A673 (cell line): ENCODE measurements at regions of chr2 and their contacts with region 1.

Region 1: DNA sequence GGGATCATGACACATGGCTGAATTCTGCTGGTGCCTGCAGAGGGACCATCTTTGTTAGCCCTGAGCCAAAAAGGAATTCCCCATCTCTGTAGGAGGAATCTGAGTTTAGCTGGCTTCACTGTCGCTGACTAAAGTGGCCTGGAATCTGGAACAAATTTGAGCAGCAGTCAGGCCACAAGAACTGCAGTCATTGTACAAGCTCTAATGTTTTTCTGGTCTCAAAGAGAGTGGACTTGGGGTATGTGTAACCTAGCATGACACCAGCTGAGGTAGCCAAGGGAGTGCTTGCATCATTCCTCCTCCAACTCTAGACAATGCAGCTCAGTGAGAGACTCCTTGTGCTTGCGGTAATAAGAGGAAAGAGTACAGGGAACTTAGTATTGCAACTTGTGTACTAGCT is 539.1 kb upstream of the LRRTM4 start:
- DNase-seq: no peak
- H3K4me3 ChIP-seq: no peak overlapping the region
- H3K27ac ChIP-seq: peak overlapping the region; percentile 100
- H3K4me1 ChIP-seq: peaks cover 49% of the 10 kb centered on the region
- H3K27me3 ChIP-seq: no peaks in the 10 kb centered on the region
- CTCF ChIP-seq: no peak

Region 2: DNA sequence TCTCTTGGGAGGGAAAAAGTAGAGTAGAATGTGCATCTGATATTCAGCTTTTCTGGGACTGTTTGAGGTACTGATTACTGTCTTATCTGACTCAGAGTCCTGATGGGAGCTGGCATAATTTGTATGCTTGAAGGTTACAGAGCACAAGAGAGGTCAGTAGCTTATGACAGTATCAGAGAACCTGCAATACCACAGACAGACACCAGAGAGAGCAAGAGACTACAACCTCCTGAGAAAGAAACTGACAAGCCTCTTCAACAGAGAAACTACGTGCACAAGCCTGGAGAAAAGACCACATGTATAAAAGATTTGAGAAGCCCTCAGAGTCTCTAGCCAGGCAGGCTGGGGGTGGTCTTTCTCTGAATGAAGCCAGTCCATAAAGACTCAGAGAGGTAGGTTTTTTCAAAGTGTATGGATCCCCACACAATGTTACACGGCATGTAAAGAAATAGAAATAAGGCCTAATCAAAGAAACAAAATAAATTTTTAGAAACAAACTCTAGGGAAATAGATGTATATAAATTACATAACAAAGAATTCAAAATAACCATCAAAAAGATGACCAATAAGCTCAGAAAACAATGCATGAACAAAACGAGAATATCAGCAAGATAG is 1107.5 kb before region 1 on chr2:
- CTCF ChIA-PET with region 1: no interaction called
- POLR2A ChIA-PET with region 1: no interaction called
- intact Hi-C with region 1: loop called (anchors 2 kb)
- DNase-seq: peak; percentile 85
- H3K4me3 ChIP-seq: no peak overlapping the region
- H3K27ac ChIP-seq: no peak overlapping the region
- H3K4me1 ChIP-seq: peaks cover 3% of the 10 kb centered on the region
- H3K27me3 ChIP-seq: no peaks in the 10 kb centered on the region
- CTCF ChIP-seq: peak; percentile 81

Region 3: DNA sequence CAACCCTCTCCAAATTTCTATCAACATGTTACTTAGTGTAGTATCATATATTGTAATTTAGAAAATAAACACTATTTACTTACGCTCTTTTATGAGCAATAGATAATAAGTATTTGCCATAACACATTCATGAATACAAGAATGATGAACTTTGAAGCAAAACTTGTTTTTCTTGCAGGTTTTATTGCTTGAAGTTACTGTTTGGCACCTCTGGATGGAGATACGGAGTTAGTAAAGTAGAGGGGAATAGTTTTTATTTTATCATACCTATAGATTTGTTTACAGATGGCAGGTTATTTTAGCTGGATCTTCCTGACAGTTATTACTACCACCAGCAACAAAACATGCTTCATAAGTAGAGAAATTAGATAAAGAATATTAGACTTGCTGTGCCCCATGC is 264.9 kb before region 1 on chr2:
- CTCF ChIA-PET with region 1: no interaction called
- POLR2A ChIA-PET with region 1: no interaction called
- intact Hi-C with region 1: loop called (anchors 2 kb)
- DNase-seq: peak; percentile 54
- H3K4me3 ChIP-seq: no peak overlapping the region
- H3K27ac ChIP-seq: no peak overlapping the region
- H3K4me1 ChIP-seq: no peaks in the 10 kb centered on the region
- H3K27me3 ChIP-seq: no peaks in the 10 kb centered on the region
- CTCF ChIP-seq: peak; percentile 51

Region 4: DNA sequence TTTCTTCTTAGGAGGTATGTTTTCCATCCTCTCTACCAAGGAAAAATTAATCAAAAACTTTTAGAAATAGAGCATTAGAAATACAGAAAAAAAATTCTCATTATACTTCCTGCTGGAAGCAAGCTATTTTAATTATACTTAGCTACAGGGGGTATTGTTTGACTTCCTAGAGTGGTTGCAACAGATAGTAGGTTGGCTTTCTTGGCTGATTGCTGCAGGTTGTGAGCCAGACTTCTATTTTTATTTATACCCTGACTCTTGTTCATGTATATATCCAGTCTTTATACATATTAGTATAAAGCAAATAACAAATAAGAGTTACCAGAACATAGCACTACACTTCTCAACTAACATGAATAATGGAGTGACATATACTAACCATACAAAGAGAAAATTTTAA is 503.4 kb after region 1 on chr2:
- CTCF ChIA-PET with region 1: no interaction called
- POLR2A ChIA-PET with region 1: no interaction called
- intact Hi-C with region 1: loop called (anchors 5 kb)
- DNase-seq: no peak
- H3K4me3 ChIP-seq: no peak overlapping the region
- H3K27ac ChIP-seq: no peak overlapping the region
- H3K4me1 ChIP-seq: peaks cover 15% of the 10 kb centered on the region
- H3K27me3 ChIP-seq: no peaks in the 10 kb centered on the region
- CTCF ChIP-seq: no peak

Region 5: DNA sequence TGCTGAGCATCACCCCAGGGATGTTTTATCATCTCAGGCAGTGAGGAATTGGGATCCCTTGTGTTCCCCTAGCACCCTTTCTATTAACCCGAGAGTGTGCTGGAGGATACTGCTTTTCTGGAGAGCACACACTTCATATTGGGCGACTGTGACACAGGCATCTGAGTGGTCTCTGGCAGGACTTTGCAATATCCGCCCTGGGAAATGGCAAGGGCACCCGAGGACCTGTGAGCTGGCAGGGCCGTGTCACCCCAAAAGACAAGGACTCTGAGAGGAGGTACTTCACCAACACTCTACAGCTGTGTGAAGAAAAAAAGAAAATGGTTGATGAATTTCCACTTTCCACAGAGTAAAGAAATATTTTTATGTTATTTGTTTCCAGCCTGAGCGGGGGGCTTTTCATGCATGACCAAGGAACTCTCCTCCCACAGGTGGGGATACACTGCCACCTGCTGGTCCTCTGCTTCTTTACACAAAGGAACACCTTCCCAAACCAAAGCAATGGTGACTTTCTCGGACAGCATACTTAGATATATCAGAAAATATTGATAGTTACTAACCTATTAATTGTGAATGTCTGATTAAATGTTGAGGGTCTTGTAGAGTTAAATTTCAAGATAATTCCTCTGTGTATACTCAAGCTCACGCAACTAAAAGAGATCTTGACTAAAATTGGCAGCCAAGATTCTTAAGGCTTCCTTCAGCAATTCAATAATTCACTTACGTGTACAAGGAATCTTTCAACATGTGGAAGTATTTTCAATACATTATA is 918.3 kb after region 1 on chr2:
- CTCF ChIA-PET with region 1: no interaction called
- POLR2A ChIA-PET with region 1: no interaction called
- intact Hi-C with region 1: loop called (anchors 1 kb)
- DNase-seq: peak; percentile 88
- H3K4me3 ChIP-seq: no peak overlapping the region
- H3K27ac ChIP-seq: peak overlapping the region; percentile 68
- H3K4me1 ChIP-seq: peaks cover 29% of the 10 kb centered on the region
- H3K27me3 ChIP-seq: no peaks in the 10 kb centered on the region
- CTCF ChIP-seq: peak; percentile 89